GM13977 (cell line): ENCODE measurements at regions of chr14 and their contacts with region 1.

Region 1: DNA sequence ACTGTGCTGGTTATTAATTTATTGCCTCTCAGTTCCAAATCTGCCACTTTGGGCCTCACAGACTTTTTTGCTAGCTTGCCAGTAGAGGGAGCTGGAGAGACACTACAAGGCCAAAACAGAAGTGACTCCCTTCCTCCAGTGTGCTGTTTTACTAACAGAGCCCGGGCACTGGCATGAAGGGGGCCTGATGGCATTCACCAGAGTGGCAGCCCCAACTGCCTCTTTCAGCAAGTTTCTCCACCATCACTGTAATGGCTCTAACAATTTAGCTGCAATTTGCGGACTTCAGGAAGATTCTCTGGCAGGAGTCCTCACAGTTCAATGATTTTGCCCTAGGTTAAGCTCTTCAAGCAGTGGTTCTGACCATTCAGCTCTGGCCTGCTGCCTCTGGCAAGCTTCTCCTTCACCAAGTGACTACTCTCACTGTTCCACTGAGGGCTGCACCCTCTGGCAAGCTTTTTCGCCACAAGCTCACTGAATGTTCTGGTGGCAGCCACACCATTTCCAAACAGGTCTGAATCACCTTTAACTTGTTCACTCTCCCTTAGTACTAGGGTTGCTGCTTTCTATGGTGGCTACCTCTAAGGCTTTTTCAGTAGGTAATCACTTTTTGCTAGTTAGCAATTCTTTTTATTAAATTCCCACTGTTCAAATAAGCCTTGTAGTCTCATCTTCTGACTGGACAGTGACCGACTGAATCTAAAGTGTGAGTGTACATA is 104.9 kb downstream of the ZC3H14 start:
- DNase-seq: peak; percentile 56
- CTCF ChIP-seq: peak; percentile 85

Region 2: DNA sequence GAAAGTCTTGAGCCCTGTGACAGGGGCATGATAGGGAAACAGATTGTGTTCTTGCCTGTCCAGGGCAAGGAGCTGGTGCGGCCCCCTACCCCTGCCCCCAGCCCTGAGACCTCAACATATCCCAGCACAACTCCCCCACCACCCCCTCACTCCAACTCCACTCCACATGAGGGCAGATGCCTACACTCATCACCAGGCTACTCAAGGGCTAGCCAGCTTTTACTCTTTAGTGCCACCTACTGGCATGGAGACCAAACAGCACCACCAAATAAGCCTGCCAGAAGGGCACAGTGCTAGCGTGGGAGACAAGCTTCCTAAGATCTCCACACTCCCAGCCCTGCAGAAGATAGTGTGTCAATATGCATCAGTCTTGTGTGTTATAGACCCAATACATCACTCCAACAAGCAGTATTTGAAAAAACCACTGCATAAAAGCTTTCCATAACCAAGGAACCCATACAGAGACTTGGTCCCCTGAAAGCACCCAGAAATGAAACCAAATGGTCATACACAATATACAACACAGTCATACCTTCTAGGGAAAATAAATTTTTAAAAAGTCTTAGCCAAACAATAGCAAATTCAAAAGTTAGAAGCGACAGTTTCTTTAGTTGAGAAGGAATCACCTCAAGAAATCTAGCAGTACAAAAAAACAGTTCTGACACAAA is 499.1 kb before region 1 on chr14:
- in situ Hi-C with region 1: no loop called
- DNase-seq: peak; percentile 61
- CTCF ChIP-seq: peak; percentile 90

Region 3: GRCh38 chr14:88568196-88568595 is 99.5 kb before region 1 on chr14:
- in situ Hi-C with region 1: no loop called
- DNase-seq: no peak
- CTCF ChIP-seq: no peak

Region 4: GRCh38 chr14:88868558-88869159 is 200.9 kb after region 1 on chr14:
- in situ Hi-C with region 1: loop called (anchors 25 kb)
- DNase-seq: peak; percentile 13
- CTCF ChIP-seq: peak; percentile 49

Region 5: GRCh38 chr14:90228478-90228877 is 1560.8 kb after region 1 on chr14:
- in situ Hi-C with region 1: no loop called
- DNase-seq: no peak
- CTCF ChIP-seq: no peak